Activated CD4-positive, alpha-beta memory T cell treated with anti-CD3 and anti-CD28 coated beads, Interleukin-2, amount 10 ng/mL, durations not matched to agents 7 days and 5 days (primary cell): ENCODE measurements at regions of chr17 and their contacts with region 1.

Region 1: DNA sequence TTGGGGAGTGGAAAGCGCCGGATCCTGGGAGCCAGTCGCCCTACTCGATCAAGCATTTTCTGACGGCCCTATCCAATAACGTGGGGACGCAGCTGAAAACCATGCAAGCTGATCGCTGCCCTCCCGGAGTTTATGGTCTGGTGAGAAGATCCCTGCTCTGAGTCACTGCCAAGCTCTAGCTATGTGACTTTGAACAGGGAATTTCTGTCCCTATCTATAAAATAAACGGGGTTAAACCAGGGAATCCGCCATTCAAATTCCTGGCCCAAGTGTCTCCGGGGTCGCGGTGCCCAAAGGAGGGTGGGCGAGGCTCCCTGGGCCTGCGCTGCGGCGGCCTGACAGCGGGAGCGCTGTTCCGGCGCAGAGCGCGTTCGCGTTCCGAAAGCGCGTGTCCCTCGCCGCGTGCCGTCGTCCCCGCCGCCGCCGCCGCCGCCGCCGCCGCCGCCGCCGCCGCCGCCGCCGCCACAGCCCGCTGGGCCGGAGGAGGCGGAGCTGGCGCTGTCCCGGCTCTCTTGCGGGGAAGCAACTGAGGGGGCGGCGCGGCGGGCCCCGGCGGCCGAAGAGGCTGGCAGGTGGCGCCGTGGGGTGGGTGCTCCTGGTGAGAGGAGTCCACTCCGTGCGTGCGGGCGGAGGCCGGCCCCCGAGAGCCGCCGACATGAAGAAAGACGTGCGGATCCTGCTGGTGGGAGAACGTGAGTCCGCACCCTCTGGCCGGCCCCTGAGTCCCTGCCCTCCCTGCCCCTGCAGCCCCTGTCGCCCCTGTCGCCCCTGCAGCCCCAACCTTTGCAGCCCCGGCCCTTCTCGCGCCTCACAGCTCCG is at the start of gene RHOT1:
- DNase-seq: peak; percentile 74
- H3K4me3 Mint-ChIP-seq: peak within 1 kb of the TSS; percentile 99
- H3K27ac Mint-ChIP-seq: peak within 1 kb of the TSS; percentile 82
- H3K4me1 Mint-ChIP-seq: peaks cover 34% of the 10 kb centered on the region
- H3K27me3 Mint-ChIP-seq: no peaks in the 10 kb centered on the region
- total RNA-seq, gene RHOT1: 26.0 to 26.4 TPM

Region 2: DNA sequence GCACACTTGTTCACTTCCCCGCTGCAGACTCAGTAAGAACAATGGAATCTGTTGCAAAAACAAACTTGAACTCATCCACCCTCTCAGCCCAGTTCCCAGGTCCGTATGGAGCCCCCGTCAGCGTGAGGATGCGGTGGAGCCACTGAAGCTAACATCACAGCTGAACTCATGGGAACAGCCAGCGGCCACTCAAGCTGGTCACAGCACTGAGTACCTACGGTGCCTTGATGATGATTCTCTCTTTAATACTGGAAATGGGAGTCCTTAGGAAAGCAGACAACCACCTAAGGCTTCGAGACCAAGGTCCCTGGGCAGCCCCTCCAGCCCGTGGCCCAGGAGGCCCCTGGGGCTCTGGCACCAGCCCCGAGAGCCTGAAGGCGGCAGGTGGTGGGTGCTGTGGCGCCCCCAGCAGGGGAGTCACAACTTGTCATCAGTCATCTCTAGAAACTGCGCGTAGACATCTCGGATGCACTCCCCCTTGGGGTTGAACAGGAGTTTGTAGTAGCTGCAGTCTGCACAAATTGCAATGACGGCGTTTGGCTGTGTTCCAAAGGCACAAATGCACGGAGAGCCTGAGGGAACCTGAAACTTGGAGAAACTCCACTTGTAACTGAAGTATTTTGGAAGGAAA is 31.0 kb before region 1 on chr17:
- CTCF ChIA-PET with region 1: interaction called, 11 read pairs
- POLR2A ChIA-PET with region 1: no interaction called
- DNase-seq: peak; percentile 57
- H3K4me3 Mint-ChIP-seq: no peak overlapping the region
- H3K27ac Mint-ChIP-seq: no peak overlapping the region
- H3K4me1 Mint-ChIP-seq: peaks cover 15% of the 10 kb centered on the region
- H3K27me3 Mint-ChIP-seq: peaks cover 4% of the 10 kb centered on the region

Region 3: DNA sequence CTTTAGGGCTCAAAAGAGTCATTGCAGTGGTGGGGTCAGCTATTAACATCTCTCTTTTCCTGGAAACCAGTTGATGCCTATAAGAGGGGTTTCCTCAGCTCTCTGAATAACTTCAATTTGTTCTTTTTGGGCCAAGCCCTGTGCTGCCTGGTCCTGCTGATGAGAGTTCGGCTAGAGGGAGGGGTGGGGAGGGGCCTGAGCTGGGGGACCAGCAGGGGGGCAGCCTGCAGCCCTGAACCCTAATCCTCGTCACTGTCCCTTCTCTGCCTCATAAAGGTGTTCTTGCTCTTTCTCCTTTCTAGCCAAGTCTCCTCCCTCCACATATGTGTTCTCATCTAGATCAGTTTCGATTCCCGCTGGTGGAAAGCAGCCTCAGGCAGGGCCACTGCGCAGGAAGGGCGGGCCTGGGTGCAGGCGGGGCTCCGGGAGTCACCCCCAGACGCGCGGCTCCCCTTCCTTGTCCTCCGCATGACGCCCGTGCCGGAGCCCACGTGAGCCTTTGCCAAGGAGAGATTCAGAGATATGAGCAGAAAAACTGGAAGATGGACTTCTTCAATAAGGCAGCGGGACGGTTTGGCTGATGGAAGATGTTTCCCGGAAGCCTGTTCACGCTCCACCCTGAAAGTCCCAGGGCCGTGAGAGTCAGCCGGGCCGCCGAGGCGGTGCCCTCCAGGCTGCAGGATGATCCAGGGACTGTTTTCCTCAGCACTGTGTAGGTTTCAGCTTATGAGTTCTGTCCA is 14.9 kb before region 1 on chr17:
- CTCF ChIA-PET with region 1: interaction called, 77 read pairs
- POLR2A ChIA-PET with region 1: interaction called, 17 read pairs
- DNase-seq: peak; percentile 92
- H3K4me3 Mint-ChIP-seq: peak overlapping the region; percentile 88
- H3K27ac Mint-ChIP-seq: peak overlapping the region; percentile 98
- H3K4me1 Mint-ChIP-seq: peaks cover 32% of the 10 kb centered on the region
- H3K27me3 Mint-ChIP-seq: no peaks in the 10 kb centered on the region